ENCODE measurements at regions of chr5 and their contacts with region 1.

Region 1: DNA sequence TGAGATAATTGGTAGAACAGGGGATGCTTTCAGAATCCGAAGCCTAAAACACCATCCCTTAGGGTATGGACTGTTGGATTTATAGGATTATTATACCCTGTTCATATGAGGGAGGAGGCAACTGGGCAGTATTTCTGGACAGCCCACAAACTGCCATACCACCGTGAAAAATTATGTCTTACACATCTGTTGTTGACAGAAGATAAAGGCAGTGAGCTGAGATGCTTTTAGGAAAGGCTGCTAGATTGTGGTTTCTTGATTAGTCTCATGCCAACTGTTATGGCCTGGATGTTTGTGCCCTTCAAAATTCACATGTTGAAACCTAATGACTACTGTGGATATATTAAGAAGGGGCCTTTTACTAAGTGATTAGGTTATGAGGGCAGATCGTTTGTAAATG is 83.7 kb upstream of the DHFR start:
- DNase-seq: no peak
- ATAC-seq: no peak
- H3K4me3 ChIP-seq: no peak overlapping the region
- H3K27ac ChIP-seq: no peak overlapping the region
- H3K4me1 ChIP-seq: no peaks in the 10 kb centered on the region
- H3K27me3 ChIP-seq: no peaks in the 10 kb centered on the region
- CTCF ChIP-seq: no peak
- POLR2A ChIP-seq: no peak
- RAD21 ChIP-seq: no peak

Region 2: DNA sequence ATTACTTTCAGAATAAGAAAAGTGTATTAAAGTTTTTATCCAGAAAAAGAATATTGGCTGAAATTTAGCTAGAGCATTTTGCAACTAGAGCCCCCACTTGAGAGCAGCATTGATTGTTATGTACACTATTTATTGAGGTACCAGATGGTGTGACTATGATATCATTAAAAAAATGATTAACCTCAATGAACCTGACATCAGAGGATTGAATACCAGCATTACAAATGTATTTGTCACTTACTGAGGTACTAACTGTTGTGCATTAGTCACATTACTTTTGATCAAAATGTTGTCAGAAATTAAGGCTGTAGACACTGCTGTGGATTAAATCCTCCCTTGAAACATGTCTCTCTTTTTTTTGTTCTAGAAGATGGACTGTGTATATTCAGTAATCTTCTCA is 44.2 kb after region 1 on chr5:
- CTCF ChIA-PET with region 1: no interaction called
- POLR2A ChIA-PET with region 1: no interaction called
- RAD21 ChIA-PET with region 1: no interaction called
- intact Hi-C with region 1: loop called (anchors 2 kb)
- DNase-seq: no peak
- ATAC-seq: no peak; the same call in 1 of the 2 replicates
- H3K4me3 ChIP-seq: no peak overlapping the region
- H3K27ac ChIP-seq: no peak overlapping the region
- H3K4me1 ChIP-seq: peaks cover 6 to 26% of the 10 kb centered on the region in 2 experiments
- H3K27me3 ChIP-seq: no peaks in the 10 kb centered on the region
- CTCF ChIP-seq: no peak
- POLR2A ChIP-seq: no peak
- RAD21 ChIP-seq: no peak

Region 3: GRCh38 chr5:80793354-80793753 is 54.9 kb after region 1 on chr5:
- CTCF ChIA-PET with region 1: no interaction called
- POLR2A ChIA-PET with region 1: no interaction called
- RAD21 ChIA-PET with region 1: no interaction called
- intact Hi-C with region 1: no loop called
- DNase-seq: no peak
- ATAC-seq: no peak; the same call in 1 of the 2 replicates
- H3K4me3 ChIP-seq: no peak overlapping the region
- H3K27ac ChIP-seq: no peak overlapping the region
- H3K4me1 ChIP-seq: no peaks in the 10 kb centered on the region
- H3K27me3 ChIP-seq: no peaks in the 10 kb centered on the region
- CTCF ChIP-seq: no peak
- POLR2A ChIP-seq: no peak
- RAD21 ChIP-seq: no peak

Measured in HCT116 (cell line).